Gastrocnemius medialis (tissue), 4 donors: ENCODE measurements at regions of chr18 and their contacts with region 1.

Region 1: DNA sequence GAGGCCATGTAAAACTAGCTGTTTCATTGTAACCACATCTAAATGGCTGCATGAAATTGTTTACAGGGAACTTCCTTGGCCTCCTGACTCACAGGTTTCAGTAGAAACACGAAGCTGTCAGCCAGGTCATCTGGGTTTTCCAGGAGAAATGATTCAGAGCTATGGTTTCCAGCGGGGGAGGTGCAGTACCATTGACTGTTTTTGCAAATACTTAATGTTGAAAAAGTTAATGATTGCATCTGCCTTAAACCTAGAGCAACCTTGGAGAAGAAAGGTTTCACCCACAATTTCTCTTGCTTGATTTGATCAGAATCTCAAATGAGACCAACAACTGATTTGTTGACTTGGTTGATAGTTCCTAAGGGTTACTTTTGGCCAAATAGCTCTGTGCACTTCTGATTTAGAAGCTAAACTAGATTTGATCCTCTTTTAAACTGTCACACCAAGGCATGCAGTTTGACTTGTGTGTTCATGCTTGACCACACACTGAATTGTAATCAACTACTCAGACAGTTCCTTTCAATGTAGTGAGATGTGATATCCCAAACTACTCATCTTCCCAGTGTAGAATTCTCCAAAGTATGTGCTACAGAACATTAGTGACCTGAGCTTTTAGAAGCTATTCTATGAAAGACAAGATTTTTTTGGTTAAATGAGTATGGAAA is 193.5 kb upstream of the CHST9 start:
- DNase-seq: peak; percentile 13 to 19
- ATAC-seq: peak; percentile 81 to 87
- H3K4me3 ChIP-seq: no peak overlapping the region
- H3K27ac ChIP-seq: peak overlapping the region in 2 of 4 donors; percentile 33 to 39
- H3K4me1 ChIP-seq: peaks cover 0 to 5% of the 10 kb centered on the region in 2 donors
- H3K27me3 ChIP-seq: no peaks in the 10 kb centered on the region
- CTCF ChIP-seq: no peak
- POLR2A ChIP-seq: no peak

Region 2: GRCh38 chr18:27298214-27298804 is 80.3 kb before region 1 on chr18:
- in situ Hi-C with region 1: loop called in 1 of 4 experiments (anchors 25 kb)
- intact Hi-C with region 1: no loop called
- DNase-seq: no peak
- ATAC-seq: no peak
- H3K4me3 ChIP-seq: no peak overlapping the region
- H3K27ac ChIP-seq: no peak overlapping the region
- H3K4me1 ChIP-seq: no peaks in the 10 kb centered on the region
- H3K27me3 ChIP-seq: no peaks in the 10 kb centered on the region
- CTCF ChIP-seq: peak in 2 of 5 experiments; percentile 10 to 13
- POLR2A ChIP-seq: no peak

Region 3: GRCh38 chr18:27413495-27414401 is 35.2 kb after region 1 on chr18:
- in situ Hi-C with region 1: no loop called
- intact Hi-C with region 1: loop called (anchors 5 kb)
- DNase-seq: peak; percentile 25 to 58
- ATAC-seq: peak; percentile 99
- H3K4me3 ChIP-seq: peak overlapping the region in 3 of 4 donors; percentile 1 to 10 (median 6)
- H3K27ac ChIP-seq: peak overlapping the region; percentile 59 to 77 (median 70)
- H3K4me1 ChIP-seq: peaks cover 8 to 16% of the 10 kb centered on the region in 2 donors
- H3K27me3 ChIP-seq: no peaks in the 10 kb centered on the region
- CTCF ChIP-seq: no peak
- POLR2A ChIP-seq: no peak